Sigmoid colon (tissue), 7 donors: ENCODE measurements at regions of chr3 and their contacts with region 1.

Region 1: DNA sequence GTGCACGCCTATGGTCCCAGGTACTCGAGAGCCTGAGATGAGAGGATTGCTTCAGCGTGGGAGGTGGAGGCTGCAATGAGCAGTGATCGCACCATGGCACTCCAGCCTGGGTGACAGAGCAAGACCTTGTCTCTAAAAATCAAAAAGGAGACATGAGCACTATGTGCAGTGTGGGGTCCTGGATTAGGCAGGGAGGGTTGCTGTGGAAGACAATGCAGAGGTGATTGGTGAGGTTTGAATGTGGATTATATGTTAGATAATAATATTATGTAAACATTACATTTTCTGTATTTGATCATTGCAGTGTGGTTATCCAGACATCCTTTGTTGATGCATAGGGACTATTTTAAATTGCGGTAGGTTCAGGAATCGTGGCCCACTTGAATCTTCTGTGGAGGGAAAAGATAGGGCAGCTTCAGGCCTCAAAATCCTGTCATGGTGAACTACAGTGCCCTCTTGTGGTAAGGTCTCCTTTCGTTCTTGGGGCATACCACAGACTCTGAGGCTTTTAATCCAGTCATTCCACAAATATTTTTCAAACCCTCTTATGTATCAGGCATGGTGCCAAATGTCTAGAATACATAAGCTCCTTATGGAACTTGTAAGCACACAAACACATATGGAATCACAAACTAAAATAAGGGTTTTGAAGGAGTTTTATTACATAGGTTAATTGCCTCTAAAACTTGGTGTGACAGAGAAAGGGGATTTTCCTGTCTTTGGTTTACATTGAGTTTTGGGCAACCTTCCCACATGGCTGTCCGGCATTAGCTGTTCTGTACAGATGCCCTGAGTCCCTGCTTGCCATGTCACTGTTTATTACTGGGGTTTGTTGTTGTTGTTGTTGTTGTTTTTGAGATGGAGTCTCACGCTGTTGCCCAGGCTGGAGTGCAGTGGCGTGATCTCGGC is 37.7 kb downstream of the GPD1L start:
- DNase-seq: no peak
- H3K4me3 ChIP-seq: no peak overlapping the region
- H3K27ac ChIP-seq: no peak overlapping the region
- H3K4me1 ChIP-seq: peaks cover 0 to 4% (median 0%) of the 10 kb centered on the region in 4 donors
- H3K27me3 ChIP-seq: no peaks in the 10 kb centered on the region
- CTCF ChIP-seq: peak; percentile 67 to 82 (median 80)
- EP300 ChIP-seq: no peak
- POLR2A ChIP-seq: no peak

Region 2: DNA sequence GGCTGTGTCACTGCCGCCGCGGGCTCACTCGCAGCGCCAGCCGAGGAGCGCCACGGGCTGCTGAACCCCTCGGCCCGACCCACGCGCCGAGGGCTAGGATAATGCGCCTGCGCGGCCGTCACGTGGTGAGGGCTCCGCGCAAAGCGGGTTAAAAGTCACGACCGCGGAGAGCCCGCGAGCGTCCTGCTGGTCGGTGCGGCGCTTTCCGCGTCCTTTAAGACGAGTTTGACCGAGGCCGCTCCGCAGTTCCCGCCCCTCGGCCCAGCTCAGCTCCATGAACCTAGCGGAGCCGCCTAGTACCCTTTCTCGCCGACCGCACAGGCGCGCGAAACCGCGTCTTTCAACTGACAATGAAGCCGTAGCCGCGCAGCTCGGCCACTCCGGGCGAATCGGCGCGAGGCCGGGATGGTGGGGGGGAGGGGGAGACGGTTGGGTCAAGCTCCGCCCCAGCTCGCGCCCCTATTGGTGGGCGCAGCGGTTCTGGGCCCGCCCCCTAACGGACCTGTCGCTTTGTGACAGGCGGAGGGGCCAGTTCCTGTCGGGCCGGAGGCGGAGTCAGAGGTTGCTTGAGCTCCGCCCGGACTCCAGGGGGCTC is 612.0 kb before region 1 on chr3:
- intact Hi-C with region 1: loop called (anchors 10 kb)
- DNase-seq: peak; percentile 100
- H3K4me3 ChIP-seq: peak overlapping the region; percentile 75 to 95 (median 90)
- H3K27ac ChIP-seq: peak overlapping the region; percentile 92 to 99 (median 96)
- H3K4me1 ChIP-seq: peaks cover 0 to 41% (median 33%) of the 10 kb centered on the region in 4 donors
- H3K27me3 ChIP-seq: no peaks in the 10 kb centered on the region
- CTCF ChIP-seq: peak in 1 of 4 experiments; percentile 11
- EP300 ChIP-seq: peak in 1 of 4 donors; percentile 19
- POLR2A ChIP-seq: peak; percentile 62 to 85

Region 3: DNA sequence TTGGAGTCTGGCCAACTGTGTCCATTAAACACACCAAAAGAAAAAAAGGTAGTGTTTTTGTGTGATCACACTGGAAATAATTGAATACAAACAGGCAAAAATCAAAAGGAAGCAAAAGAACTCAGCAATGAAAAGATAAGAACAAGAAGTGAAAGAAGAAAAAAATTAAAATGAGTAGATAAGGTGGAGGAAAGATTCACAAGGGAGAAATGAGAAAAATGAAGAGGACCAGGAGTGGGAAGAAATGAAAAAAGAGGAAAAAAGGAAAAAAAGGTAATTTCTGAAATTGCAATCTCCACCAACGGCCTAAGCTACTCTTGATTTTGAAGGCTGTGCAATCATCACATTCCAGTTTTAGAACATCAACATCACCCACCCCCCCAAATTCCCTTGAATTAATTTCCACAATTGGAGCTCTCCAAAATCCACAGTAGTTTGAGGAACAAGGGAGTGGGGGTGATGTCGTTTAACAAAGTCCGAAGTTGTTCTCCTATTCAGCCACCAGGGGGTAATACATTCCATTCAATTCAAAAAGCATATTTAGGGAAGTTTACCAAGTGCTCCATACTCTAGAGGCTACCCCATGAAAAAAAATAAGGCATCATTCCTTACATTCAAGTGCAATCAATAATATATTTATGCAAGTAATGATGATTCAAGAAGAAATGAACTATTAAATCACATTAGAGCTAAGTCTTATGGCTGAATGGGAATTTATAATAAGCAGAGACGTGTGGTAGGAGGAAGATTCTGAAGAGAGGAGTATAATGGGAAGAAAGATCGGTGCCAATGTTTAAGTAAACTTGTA is 125.1 kb before region 1 on chr3:
- intact Hi-C with region 1: loop called (anchors 1 kb)
- DNase-seq: no peak
- H3K4me3 ChIP-seq: no peak overlapping the region
- H3K27ac ChIP-seq: peak overlapping the region in 3 of 4 donors; percentile 5 to 53 (median 49)
- H3K4me1 ChIP-seq: peaks cover 0 to 25% (median 16%) of the 10 kb centered on the region in 4 donors
- H3K27me3 ChIP-seq: no peaks in the 10 kb centered on the region
- CTCF ChIP-seq: peak; percentile 70 to 88 (median 76)
- EP300 ChIP-seq: no peak
- POLR2A ChIP-seq: no peak